ENCODE measurements at regions of chr6 and their contacts with region 1.

Region 1: DNA sequence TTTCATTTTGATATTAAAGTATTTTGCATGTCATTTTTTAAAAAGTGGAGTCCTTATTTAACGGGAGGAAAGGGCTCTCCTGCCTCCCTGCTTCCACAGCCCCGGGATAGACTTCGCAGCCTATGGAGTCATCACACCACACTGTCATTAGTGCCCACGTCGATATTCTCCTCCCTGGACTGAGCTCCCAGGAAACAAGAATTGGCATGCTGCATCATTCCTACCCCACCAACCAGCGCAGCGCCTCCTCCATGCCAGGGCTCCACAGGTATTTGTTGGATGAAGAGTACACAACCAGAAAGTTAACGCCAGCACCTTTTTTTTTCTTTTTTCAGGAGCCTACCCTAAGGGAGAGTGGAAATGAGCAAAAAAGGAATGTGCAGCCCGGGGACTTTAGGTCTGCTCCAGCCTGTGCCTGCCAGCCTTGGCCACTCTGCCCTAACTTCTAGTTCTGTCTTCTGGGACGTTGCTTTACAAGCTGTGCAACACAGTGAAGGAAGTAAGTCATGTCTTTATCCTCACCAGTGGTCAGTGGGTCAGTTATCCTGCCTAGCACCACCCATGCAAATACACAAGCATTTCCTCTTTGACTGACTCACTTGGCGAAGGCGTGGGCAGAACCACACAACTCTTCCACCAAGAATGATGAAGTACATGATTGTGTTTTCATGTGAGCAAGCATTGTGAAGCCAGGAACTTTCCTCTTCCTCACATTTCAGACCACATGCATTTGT is 180.7 kb upstream of the UST start:
- DNase-seq: no peak
- ATAC-seq: peak; percentile 42; the same call in 1 of the 2 replicates
- H3K4me3 ChIP-seq: no peak overlapping the region
- H3K27ac ChIP-seq: no peak overlapping the region
- H3K4me1 ChIP-seq: no peaks in the 10 kb centered on the region
- H3K27me3 ChIP-seq: no peaks in the 10 kb centered on the region
- CTCF ChIP-seq: no peak

Region 2: DNA sequence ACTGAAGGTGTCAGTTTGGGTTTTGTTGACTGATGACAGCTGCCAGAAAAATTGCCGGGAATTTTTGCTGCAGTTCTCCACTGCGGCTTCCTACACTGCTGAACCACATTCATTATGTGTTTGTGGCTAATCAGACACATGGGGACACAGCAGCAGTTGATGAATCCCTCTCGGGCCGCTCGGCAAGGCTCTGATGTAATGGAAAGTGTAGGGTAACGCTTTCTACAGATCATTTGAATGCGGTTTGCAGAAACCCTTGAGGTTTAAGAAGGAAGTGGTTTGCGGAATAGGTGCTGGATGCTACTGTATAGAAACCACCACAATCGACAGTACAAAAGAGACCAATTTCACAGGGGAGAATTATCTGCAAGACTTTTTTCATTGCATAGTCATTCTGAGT is 362.1 kb before region 1 on chr6:
- CTCF ChIA-PET with region 1: no interaction called
- POLR2A ChIA-PET with region 1: no interaction called
- in situ Hi-C with region 1: no loop called
- intact Hi-C with region 1: no loop called
- DNase-seq: no peak
- ATAC-seq: no peak
- H3K4me3 ChIP-seq: no peak overlapping the region
- H3K27ac ChIP-seq: no peak overlapping the region
- H3K4me1 ChIP-seq: no peaks in the 10 kb centered on the region
- H3K27me3 ChIP-seq: no peaks in the 10 kb centered on the region
- CTCF ChIP-seq: no peak

Region 3: GRCh38 chr6:148611234-148611633 is 45.1 kb after region 1 on chr6:
- CTCF ChIA-PET with region 1: no interaction called
- POLR2A ChIA-PET with region 1: no interaction called
- in situ Hi-C with region 1: no loop called
- intact Hi-C with region 1: loop called (anchors 2 kb)
- DNase-seq: no peak
- ATAC-seq: no peak
- H3K4me3 ChIP-seq: no peak overlapping the region
- H3K27ac ChIP-seq: no peak overlapping the region
- H3K4me1 ChIP-seq: no peaks in the 10 kb centered on the region
- H3K27me3 ChIP-seq: no peaks in the 10 kb centered on the region
- CTCF ChIP-seq: no peak

Measured in Panc1 (cell line).